Ovary (tissue), 10 donors: ENCODE measurements at regions of chr1 and their contacts with region 1.

Region 1: GRCh38 chr1:181166377-181167196 is 78.1 kb downstream of the IER5 start:
- DNase-seq: peak; percentile 55 to 74 (median 58)
- H3K4me3 ChIP-seq: no peak overlapping the region
- H3K27ac ChIP-seq: no peak overlapping the region
- H3K4me1 ChIP-seq: no peaks in the 10 kb centered on the region
- H3K27me3 ChIP-seq: no peaks in the 10 kb centered on the region
- CTCF ChIP-seq: peak; percentile 50 to 82 (median 68)
- EP300 ChIP-seq: no peak
- POLR2A ChIP-seq: no peak

Region 2: DNA sequence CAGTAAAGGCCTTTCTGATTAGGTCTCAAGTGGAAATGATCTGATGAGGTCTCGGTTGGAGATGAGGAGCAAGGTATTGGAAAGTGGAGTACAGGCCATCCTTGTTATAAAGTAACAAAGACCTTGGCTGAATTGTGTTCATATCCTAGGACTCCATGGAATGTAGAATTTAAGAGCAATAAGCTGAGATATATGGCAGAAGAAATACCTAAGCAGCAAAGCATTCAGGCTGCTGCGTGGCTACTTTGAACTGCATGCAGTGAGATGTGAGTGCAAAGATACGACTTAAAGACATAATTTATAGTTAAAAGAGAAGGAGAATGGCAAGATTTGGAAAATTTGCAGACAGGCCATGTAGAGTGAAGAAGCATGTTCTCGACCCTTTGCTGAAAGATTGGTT is 546.0 kb before region 1 on chr1:
- intact Hi-C with region 1: no loop called
- DNase-seq: no peak
- H3K4me3 ChIP-seq: no peak overlapping the region
- H3K27ac ChIP-seq: no peak overlapping the region
- H3K4me1 ChIP-seq: no peaks in the 10 kb centered on the region
- H3K27me3 ChIP-seq: no peaks in the 10 kb centered on the region
- CTCF ChIP-seq: no peak
- EP300 ChIP-seq: no peak
- POLR2A ChIP-seq: no peak

Region 3: GRCh38 chr1:180631766-180632325 is 534.7 kb before region 1 on chr1 and contains the start of gene XPR1:
- intact Hi-C with region 1: loop called in 1 of 4 experiments (anchors 10 kb)
- DNase-seq: peak; percentile 97 to 99 (median 98)
- H3K4me3 ChIP-seq: peak within 1 kb of the TSS; percentile 50
- H3K27ac ChIP-seq: peak within 1 kb of the TSS; percentile 66 to 82
- H3K4me1 ChIP-seq: peaks cover 3% of the 10 kb centered on the region
- H3K27me3 ChIP-seq: no peaks in the 10 kb centered on the region
- CTCF ChIP-seq: peak in 2 of 3 donors; percentile 29 to 41
- EP300 ChIP-seq: no peak
- POLR2A ChIP-seq: peak; percentile 93
- total RNA-seq, gene XPR1: 15.0 to 34.1 (median 18.1) TPM

Region 4: DNA sequence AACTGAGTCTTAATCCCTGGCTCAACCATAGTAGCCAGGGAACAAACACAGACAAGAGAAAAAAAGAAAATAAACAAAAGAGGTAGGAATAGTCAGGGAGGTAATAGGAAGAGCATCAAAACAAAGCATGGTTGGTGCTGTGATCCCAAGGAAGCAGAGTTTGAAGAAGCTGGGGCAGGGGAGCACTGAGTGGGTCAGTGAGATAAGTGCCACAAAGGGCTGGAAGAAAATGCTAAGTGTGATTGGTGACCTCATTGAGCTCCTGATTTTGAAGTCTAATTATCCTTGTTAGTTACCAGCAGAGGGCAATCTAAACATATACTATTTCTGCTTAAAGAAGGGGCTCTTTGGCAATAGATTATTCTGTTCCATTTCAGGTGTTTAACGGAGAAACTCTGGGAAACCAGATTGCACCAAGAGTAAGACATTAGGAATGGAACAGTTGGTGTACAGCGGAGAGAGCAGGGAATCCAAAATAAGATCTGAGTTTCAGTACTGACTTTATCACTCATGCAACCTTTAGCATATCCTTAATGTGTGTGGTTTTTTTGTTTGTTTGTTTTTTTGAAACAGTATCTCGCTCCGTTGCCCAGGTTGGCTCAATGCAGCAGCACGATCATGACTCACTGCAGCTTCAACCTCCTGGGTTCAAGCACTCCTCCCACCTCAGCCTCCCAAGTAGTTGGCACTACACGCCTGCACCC is 284.6 kb before region 1 on chr1:
- intact Hi-C with region 1: loop called in 3 of 4 experiments (anchors 5 kb)
- DNase-seq: no peak
- H3K4me3 ChIP-seq: no peak overlapping the region
- H3K27ac ChIP-seq: no peak overlapping the region
- H3K4me1 ChIP-seq: no peaks in the 10 kb centered on the region
- H3K27me3 ChIP-seq: no peaks in the 10 kb centered on the region
- CTCF ChIP-seq: peak in 2 of 3 donors; percentile 64 to 69
- EP300 ChIP-seq: no peak
- POLR2A ChIP-seq: no peak